Cardiac septum (tissue), 1 donor: ENCODE measurements at regions of chr1 and their contacts with region 1.

Region 1: GRCh38 chr1:230104395-230105244 is 37.6 kb downstream of the GALNT2 start:
- DNase-seq: peak; percentile 96

Region 2: GRCh38 chr1:230215031-230215430 is 110.4 kb after region 1 on chr1:
- intact Hi-C with region 1: loop called (anchors 5 kb)
- DNase-seq: no peak

Region 3: DNA sequence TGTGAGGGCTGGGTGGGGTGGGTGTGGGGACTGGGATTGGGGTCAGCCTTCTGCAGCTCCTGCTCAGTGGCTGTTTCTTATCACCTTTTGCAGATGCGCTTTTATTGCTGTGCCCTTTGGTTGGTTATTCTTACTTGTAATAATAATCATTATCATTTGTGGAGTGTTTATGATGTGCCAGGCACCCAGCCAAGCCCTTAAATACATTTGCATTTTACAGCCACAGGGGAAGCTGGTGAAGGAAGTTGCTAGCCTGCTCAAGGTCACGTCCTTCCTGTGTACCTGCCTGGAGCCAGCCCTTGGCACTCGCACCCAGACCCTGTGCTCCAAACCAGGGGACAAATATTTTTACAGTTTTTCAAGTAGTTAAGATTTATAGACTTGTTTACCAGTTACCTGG is 177.5 kb after region 1 on chr1:
- intact Hi-C with region 1: no loop called
- DNase-seq: no peak